CD8-positive, alpha-beta memory T cell (primary cell): ENCODE measurements at regions of chr9 and their contacts with region 1.

Region 1: DNA sequence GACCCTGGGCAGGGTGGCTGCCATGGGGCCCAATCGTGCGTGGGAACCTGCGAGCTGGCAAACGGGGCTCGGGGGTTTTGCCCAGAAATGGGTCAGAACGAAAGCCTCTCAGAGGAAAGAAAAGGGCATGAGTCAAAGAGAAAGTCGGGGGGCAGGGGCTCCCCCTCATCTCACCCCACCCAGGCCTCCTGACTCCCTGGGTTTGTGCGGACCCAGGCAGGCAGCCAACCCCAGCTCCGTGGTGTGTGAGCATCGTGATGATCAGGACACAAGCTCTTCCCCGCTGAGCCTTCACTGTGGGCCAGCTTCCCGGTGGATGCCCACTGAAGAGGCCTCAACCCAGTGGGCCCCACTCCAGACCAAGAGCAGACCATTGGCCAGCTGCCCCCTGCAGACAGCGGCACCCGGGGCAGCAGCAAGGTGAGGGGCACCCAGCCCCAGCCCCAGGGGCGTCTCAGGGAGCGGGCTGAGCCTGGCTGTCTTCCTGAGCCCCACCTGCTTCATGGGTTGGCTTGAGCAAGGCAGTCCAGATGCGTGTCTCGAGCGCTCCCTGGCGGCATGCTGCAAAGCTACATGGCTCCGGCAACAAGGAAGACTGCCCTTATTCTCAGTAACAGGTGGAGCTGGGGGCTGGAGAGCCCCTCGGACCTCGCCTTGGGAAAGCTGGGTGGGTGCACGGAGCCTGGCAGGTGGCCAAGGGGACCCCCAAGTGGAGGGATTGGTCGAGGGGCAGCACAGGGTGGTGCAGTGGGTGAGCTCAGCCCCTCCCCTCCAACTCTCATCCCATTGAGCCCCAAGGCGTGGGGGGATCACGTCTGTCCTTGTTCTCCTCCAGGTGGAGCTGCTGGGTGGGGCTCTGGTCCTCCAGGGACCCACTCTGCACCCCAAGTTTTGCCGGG is 3.2 kb upstream of the FUT7 start:
- DNase-seq: peak; percentile 81 to 92 (median 83)
- H3K4me3 ChIP-seq: peak overlapping the region; percentile 58
- H3K4me3 Mint-ChIP-seq: peak overlapping the region; percentile 72 to 89 (median 76)
- H3K27ac ChIP-seq: peak overlapping the region; percentile 38
- H3K27ac Mint-ChIP-seq: peak overlapping the region; percentile 75 to 96 (median 89)
- H3K4me1 ChIP-seq: peaks cover 40% of the 10 kb centered on the region
- H3K4me1 Mint-ChIP-seq: peaks cover 35 to 46% (median 36%) of the 10 kb centered on the region in 3 donors
- H3K27me3 ChIP-seq: no peaks in the 10 kb centered on the region
- H3K27me3 Mint-ChIP-seq: no peaks in the 10 kb centered on the region

Region 2: DNA sequence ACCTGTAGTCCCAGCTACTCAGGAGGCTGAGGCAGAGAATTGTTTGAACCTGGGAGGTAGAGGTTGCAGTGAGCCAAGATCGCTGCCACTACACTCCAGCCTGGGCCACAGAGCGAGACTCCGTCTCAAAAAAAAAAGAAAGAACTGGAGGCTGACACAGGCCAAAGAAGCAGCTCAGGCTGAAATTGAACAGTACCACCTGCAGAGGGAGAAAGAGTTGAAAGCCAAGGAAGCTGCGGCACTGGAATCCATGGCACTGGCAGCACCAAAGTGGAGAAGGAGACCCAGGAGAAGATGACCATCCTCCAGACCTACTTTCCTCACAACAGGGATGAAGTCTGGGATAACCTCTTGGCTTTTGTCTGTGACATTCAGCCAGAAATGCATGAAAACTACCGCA is 255.3 kb before region 1 on chr9:
- CTCF ChIA-PET with region 1: interaction called, 16 read pairs
- POLR2A ChIA-PET with region 1: no interaction called
- DNase-seq: no peak
- H3K4me3 ChIP-seq: no peak overlapping the region
- H3K4me3 Mint-ChIP-seq: no peak overlapping the region
- H3K27ac ChIP-seq: no peak overlapping the region
- H3K27ac Mint-ChIP-seq: no peak overlapping the region
- H3K4me1 ChIP-seq: no peaks in the 10 kb centered on the region
- H3K4me1 Mint-ChIP-seq: peaks cover 0 to 3% (median 0%) of the 10 kb centered on the region in 3 donors
- H3K27me3 ChIP-seq: no peaks in the 10 kb centered on the region
- H3K27me3 Mint-ChIP-seq: peaks cover 16 to 22% of the 10 kb centered on the region in 2 donors

Region 3: GRCh38 chr9:136807281-136808074 is 227.6 kb before region 1 on chr9 and contains the start of gene RABL6:
- CTCF ChIA-PET with region 1: interaction called, 14 read pairs
- POLR2A ChIA-PET with region 1: interaction called, 5 read pairs
- DNase-seq: peak; percentile 74 to 89 (median 86)
- H3K4me3 ChIP-seq: peak within 1 kb of the TSS; percentile 69
- H3K4me3 Mint-ChIP-seq: peak within 1 kb of the TSS; percentile 88 to 95 (median 91)
- H3K27ac ChIP-seq: peak within 1 kb of the TSS; percentile 78
- H3K27ac Mint-ChIP-seq: peak within 1 kb of the TSS; percentile 92 to 97 (median 94)
- H3K4me1 ChIP-seq: peaks cover 29% of the 10 kb centered on the region
- H3K4me1 Mint-ChIP-seq: peaks cover 24 to 47% (median 28%) of the 10 kb centered on the region in 3 donors
- H3K27me3 ChIP-seq: no peaks in the 10 kb centered on the region
- H3K27me3 Mint-ChIP-seq: peaks cover 0 to 1% of the 10 kb centered on the region in 2 donors
- total RNA-seq, gene RABL6: 98.2 to 106 TPM

Region 4: GRCh38 chr9:136937186-136938011 is 97.7 kb before region 1 on chr9:
- CTCF ChIA-PET with region 1: interaction called, 11 read pairs
- POLR2A ChIA-PET with region 1: no interaction called
- DNase-seq: peak in 1 of 5 donors; percentile 23
- H3K4me3 ChIP-seq: no peak overlapping the region
- H3K4me3 Mint-ChIP-seq: no peak overlapping the region
- H3K27ac ChIP-seq: no peak overlapping the region
- H3K27ac Mint-ChIP-seq: no peak overlapping the region
- H3K4me1 ChIP-seq: no peaks in the 10 kb centered on the region
- H3K4me1 Mint-ChIP-seq: peaks cover 5 to 11% (median 8%) of the 10 kb centered on the region in 3 donors
- H3K27me3 ChIP-seq: no peaks in the 10 kb centered on the region
- H3K27me3 Mint-ChIP-seq: no peaks in the 10 kb centered on the region

Region 5: GRCh38 chr9:136961279-136962065 is 73.6 kb before region 1 on chr9:
- CTCF ChIA-PET with region 1: interaction called, 13 read pairs
- POLR2A ChIA-PET with region 1: interaction called, 6 read pairs
- DNase-seq: no peak
- H3K4me3 ChIP-seq: no peak overlapping the region
- H3K4me3 Mint-ChIP-seq: peak overlapping the region in 3 of 7 donors; percentile 72 to 86 (median 78)
- H3K27ac ChIP-seq: no peak overlapping the region
- H3K27ac Mint-ChIP-seq: peak overlapping the region in 5 of 8 donors; percentile 29 to 93 (median 69)
- H3K4me1 ChIP-seq: peaks cover 52% of the 10 kb centered on the region
- H3K4me1 Mint-ChIP-seq: peaks cover 44 to 86% (median 48%) of the 10 kb centered on the region in 3 donors
- H3K27me3 ChIP-seq: no peaks in the 10 kb centered on the region
- H3K27me3 Mint-ChIP-seq: peaks cover 0 to 3% of the 10 kb centered on the region in 2 donors

Region 6: GRCh38 chr9:137000177-137000883 is 34.8 kb before region 1 on chr9:
- CTCF ChIA-PET with region 1: interaction called, 72 read pairs
- POLR2A ChIA-PET with region 1: interaction called, 5 read pairs
- DNase-seq: peak in 2 of 5 donors; percentile 29 to 61
- H3K4me3 ChIP-seq: no peak overlapping the region
- H3K4me3 Mint-ChIP-seq: peak overlapping the region; percentile 62 to 93 (median 79)
- H3K27ac ChIP-seq: peak overlapping the region; percentile 43
- H3K27ac Mint-ChIP-seq: peak overlapping the region; percentile 84 to 96 (median 91)
- H3K4me1 ChIP-seq: peaks cover 46% of the 10 kb centered on the region
- H3K4me1 Mint-ChIP-seq: peaks cover 38 to 60% (median 40%) of the 10 kb centered on the region in 3 donors
- H3K27me3 ChIP-seq: no peaks in the 10 kb centered on the region
- H3K27me3 Mint-ChIP-seq: no peaks in the 10 kb centered on the region

Region 7: DNA sequence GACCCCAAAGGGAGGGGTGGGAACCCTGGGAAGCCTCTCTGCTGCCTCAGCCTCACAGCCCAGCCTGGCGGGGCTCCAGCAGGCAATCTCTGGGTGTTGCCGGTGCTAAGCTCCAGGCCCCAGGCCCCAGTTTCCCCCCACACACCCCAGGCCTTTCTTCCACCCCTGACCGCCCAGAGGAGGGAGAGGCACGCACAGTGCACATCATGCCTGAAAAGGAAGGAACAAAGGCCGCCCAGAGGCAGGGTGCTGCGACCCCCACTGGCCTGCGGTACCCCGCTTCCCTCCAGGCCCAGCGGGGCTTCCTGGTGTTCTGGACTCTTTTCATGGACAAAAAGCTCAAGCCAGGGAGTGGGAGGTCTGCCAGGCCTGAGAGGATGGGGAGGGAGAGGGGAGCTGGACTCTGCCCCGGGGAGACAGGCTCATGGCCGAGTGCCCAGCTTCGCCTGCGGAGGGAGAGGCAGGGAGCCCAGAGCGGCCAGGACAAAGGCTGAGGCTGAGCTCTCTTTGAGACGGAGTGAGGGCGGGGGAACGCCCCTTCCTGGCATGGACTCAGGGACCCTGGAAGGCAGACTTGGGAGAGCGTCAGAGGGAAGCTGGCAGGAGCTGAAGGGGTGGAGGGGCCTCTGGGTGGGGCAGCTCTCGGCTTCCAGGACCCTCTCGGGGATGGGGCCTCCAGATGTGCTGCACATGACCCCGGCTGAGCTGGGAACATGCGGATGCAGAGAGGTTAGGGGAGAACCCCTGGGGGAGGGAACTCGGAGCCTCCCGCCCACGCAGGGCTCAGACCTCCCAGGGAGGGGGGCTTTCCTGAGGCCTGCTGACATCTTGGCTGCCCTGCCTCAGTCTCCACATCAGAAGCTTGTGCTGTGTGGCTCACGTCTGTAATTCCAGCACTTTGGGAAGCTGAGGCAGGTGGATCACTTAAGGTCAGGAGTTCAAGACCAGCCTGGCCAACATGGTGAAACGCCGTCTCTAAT is 20.6 kb after region 1 on chr9:
- CTCF ChIA-PET with region 1: interaction called, 10 read pairs
- POLR2A ChIA-PET with region 1: no interaction called
- DNase-seq: no peak
- H3K4me3 ChIP-seq: no peak overlapping the region
- H3K4me3 Mint-ChIP-seq: no peak overlapping the region
- H3K27ac ChIP-seq: no peak overlapping the region
- H3K27ac Mint-ChIP-seq: no peak overlapping the region
- H3K4me1 ChIP-seq: peaks cover 8% of the 10 kb centered on the region
- H3K4me1 Mint-ChIP-seq: no peaks in the 10 kb centered on the region
- H3K27me3 ChIP-seq: peaks cover 25% of the 10 kb centered on the region
- H3K27me3 Mint-ChIP-seq: peaks cover 4 to 7% of the 10 kb centered on the region in 2 donors